ENCODE measurements at regions of chr12 and their contacts with region 1.

Region 1: GRCh38 chr12:13100882-13101769 is 2.3 kb downstream of the GSG1 start:
- DNase-seq: peak; percentile 94
- ATAC-seq: peak; percentile 79
- H3K4me3 Mint-ChIP-seq: peak overlapping the region; percentile 83
- H3K27ac Mint-ChIP-seq: peak overlapping the region; percentile 96
- H3K4me1 Mint-ChIP-seq: peaks cover 63% of the 10 kb centered on the region
- H3K27me3 Mint-ChIP-seq: no peaks in the 10 kb centered on the region
- CTCF ChIP-seq: no peak

Region 2: GRCh38 chr12:11836282-11837151 is 1264.6 kb before region 1 on chr12:
- CTCF ChIA-PET with region 1: no interaction called
- POLR2A ChIA-PET with region 1: no interaction called
- intact Hi-C with region 1: loop called (anchors 5 kb)
- DNase-seq: peak; percentile 73
- ATAC-seq: peak; percentile 94
- H3K4me3 Mint-ChIP-seq: peak overlapping the region; percentile 73
- H3K27ac Mint-ChIP-seq: peak overlapping the region; percentile 95
- H3K4me1 Mint-ChIP-seq: peaks cover 81% of the 10 kb centered on the region
- H3K27me3 Mint-ChIP-seq: no peaks in the 10 kb centered on the region
- CTCF ChIP-seq: no peak

Region 3: DNA sequence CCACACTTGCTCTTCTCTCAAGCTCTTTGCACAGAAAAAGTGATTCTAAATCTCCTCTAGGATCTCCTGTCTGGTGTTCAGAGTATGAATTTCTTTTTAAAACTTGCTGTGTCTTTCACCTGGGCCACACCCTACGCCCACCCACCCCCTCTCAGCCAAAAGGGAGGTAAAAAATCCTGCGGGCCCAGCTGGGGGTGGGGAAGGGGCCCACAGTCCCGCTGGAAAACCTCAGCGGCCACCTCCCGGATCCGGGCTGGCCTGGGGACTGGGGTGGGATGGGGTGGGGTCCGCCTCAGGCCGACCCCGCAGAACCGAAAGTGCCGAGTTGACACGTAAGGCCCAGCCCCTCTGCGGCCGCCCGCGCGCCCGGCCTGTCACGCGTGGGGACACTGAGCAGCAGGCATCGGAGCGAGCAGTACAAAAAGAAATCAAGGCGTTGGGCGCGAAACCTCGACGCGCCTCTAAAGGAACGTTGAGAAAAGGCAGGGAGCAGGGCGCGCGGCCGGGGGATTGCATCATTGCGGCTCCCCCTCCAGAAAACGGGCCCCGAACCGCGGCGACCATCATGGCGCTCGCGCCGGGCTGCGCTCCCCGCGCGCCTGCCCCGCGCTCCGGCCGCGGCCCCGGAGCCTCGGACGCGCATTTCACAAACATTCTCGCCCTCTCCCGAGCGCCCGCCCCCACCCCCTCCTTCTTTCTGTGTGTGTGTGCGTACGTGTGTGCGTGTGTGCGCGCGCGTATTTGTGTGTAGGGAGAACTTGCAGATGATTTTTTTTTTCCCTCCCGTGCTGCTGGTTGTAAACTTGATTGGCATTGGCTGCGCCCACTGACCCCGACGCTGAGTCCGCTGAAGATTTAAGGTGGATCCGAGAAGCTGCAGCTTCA is 376.2 kb before region 1 on chr12:
- CTCF ChIA-PET with region 1: no interaction called
- POLR2A ChIA-PET with region 1: no interaction called
- intact Hi-C with region 1: loop called (anchors 1 kb)
- DNase-seq: peak; percentile 81
- ATAC-seq: peak; percentile 69
- H3K4me3 Mint-ChIP-seq: peak overlapping the region; percentile 97
- H3K27ac Mint-ChIP-seq: peak overlapping the region; percentile 97
- H3K4me1 Mint-ChIP-seq: peaks cover 50% of the 10 kb centered on the region
- H3K27me3 Mint-ChIP-seq: no peaks in the 10 kb centered on the region
- CTCF ChIP-seq: no peak

Region 4: GRCh38 chr12:12916135-12916944 is 184.8 kb before region 1 on chr12:
- CTCF ChIA-PET with region 1: no interaction called
- POLR2A ChIA-PET with region 1: no interaction called
- intact Hi-C with region 1: loop called (anchors 1 kb)
- DNase-seq: peak; percentile 73
- ATAC-seq: peak; percentile 99
- H3K4me3 Mint-ChIP-seq: no peak overlapping the region
- H3K27ac Mint-ChIP-seq: no peak overlapping the region
- H3K4me1 Mint-ChIP-seq: peaks cover 8% of the 10 kb centered on the region
- H3K27me3 Mint-ChIP-seq: peaks cover 16% of the 10 kb centered on the region
- CTCF ChIP-seq: peak; percentile 86

Region 5: DNA sequence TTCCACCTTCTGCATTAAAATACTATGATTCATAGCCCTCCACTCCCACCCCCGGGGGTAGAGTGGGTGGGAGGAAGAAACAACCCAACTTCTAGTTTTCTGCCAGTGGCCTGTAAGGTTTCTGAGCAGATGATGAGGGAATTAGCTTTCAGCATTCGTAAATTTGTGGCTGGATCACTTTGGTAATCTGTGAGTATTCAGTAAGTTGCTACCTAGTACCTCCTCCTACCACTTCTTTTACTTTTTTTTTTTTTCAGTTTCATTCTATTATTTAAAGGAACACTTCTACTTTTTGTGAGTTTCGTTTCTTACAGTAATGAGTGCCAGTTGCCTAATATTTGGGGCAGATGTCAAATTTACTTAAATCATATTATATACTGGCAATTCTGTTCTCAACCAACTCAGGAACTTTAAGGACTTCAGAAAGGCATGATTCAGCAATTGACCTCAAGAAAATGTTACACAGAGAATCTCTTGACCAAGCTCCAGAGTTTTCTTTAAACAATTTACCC is 53.0 kb after region 1 on chr12:
- CTCF ChIA-PET with region 1: no interaction called
- POLR2A ChIA-PET with region 1: no interaction called
- intact Hi-C with region 1: loop called (anchors 5 kb)
- DNase-seq: no peak
- ATAC-seq: peak; percentile 50
- H3K4me3 Mint-ChIP-seq: peak overlapping the region; percentile 26
- H3K27ac Mint-ChIP-seq: peak overlapping the region; percentile 51
- H3K4me1 Mint-ChIP-seq: peaks cover 13% of the 10 kb centered on the region
- H3K27me3 Mint-ChIP-seq: peaks cover 5% of the 10 kb centered on the region
- CTCF ChIP-seq: no peak

Region 6: GRCh38 chr12:13211859-13212664 is 110.9 kb after region 1 on chr12:
- CTCF ChIA-PET with region 1: interaction called, 37 read pairs
- POLR2A ChIA-PET with region 1: interaction called, 3 read pairs
- intact Hi-C with region 1: loop called (anchors 1 kb)
- DNase-seq: peak; percentile 31
- ATAC-seq: peak; percentile 77
- H3K4me3 Mint-ChIP-seq: no peak overlapping the region
- H3K27ac Mint-ChIP-seq: no peak overlapping the region
- H3K4me1 Mint-ChIP-seq: peaks cover 4% of the 10 kb centered on the region
- H3K27me3 Mint-ChIP-seq: peaks cover 18% of the 10 kb centered on the region
- CTCF ChIP-seq: no peak

Region 7: DNA sequence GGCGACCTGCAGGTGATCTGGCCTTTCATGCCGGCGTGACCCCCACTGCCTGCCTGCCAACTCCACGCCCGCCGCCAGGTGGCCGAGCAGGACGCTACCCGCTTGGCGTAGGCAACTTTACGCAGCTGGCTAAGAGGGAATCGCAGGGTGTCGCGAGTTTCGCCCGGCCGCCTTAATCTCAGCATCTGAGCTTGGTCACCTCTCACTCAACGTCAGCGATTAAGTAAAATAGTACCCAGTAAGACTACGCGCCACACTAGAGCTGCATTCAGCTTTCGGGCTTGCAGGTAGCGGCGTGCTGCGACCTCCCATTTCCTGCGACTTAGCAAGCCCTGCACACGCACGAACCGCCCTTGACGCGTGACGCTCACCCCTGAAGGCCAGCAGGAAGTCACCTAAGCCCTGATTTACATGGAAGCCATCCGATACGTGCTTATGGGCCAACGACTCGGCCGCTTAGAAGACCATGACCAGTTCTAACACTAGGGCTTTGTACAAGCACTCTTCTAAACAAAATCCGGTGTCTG is 1668.9 kb after region 1 on chr12:
- CTCF ChIA-PET with region 1: no interaction called
- POLR2A ChIA-PET with region 1: interaction called, 4 read pairs
- intact Hi-C with region 1: loop called (anchors 2 kb)
- DNase-seq: peak; percentile 91
- ATAC-seq: peak; percentile 56
- H3K4me3 Mint-ChIP-seq: peak overlapping the region; percentile 98
- H3K27ac Mint-ChIP-seq: peak overlapping the region; percentile 99
- H3K4me1 Mint-ChIP-seq: peaks cover 61% of the 10 kb centered on the region
- H3K27me3 Mint-ChIP-seq: no peaks in the 10 kb centered on the region
- CTCF ChIP-seq: no peak

Measured in activated B cell treated with CpG ODN at 0.5 μM for 24 hours (primary cell).